Activated naive CD4-positive, alpha-beta T cell treated with anti-CD3 and anti-CD28 coated beads for 36 hours (primary cell): ENCODE measurements at regions of chr7 and their contacts with region 1.

Region 1: DNA sequence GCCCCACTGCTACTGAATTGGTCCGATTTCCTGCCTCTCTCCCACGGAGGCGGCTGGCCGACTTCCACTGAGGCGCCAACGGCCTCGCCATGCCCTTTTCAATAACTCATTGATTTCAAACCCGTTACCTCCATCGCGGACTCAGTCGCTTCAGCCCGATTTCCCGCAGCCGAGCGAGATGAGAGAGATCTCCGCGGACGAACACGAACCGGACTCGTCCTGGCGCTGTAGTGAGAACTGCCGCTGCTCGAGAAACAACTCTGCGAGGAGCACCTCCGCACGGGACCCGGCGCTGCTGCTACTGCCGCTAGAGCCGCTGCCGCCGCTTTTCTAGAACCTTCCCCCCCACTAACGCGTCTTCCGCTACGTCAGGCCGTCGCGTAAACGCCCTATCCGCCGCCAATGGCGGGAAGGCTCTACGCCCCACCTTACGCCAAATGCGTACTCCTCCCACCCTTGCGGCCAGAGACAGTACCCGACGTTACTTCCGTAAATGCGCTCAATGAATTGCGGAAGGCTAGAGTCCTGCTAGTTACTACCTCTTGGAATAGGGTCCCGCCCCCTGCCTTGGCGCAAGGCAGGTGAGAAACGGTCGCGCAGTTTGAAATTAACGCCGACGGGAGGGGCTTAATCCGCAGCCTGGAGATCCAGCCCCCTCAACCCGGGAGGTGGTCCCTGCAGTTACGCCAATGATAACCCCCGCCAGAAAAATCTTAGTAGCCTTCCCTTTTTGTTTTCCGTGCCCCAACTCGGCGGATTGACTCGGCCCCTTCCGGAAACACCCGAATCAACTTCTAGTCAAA is at the start of gene HNRNPA2B1:
- DNase-seq: peak; percentile 98
- H3K4me3 Mint-ChIP-seq: peak within 1 kb of the TSS; percentile 100
- H3K27ac Mint-ChIP-seq: peak within 1 kb of the TSS; percentile 100
- H3K4me1 Mint-ChIP-seq: peaks cover 38% of the 10 kb centered on the region
- H3K27me3 Mint-ChIP-seq: no peaks in the 10 kb centered on the region
- total RNA-seq, gene HNRNPA2B1: 925 to 950 TPM

Region 2: DNA sequence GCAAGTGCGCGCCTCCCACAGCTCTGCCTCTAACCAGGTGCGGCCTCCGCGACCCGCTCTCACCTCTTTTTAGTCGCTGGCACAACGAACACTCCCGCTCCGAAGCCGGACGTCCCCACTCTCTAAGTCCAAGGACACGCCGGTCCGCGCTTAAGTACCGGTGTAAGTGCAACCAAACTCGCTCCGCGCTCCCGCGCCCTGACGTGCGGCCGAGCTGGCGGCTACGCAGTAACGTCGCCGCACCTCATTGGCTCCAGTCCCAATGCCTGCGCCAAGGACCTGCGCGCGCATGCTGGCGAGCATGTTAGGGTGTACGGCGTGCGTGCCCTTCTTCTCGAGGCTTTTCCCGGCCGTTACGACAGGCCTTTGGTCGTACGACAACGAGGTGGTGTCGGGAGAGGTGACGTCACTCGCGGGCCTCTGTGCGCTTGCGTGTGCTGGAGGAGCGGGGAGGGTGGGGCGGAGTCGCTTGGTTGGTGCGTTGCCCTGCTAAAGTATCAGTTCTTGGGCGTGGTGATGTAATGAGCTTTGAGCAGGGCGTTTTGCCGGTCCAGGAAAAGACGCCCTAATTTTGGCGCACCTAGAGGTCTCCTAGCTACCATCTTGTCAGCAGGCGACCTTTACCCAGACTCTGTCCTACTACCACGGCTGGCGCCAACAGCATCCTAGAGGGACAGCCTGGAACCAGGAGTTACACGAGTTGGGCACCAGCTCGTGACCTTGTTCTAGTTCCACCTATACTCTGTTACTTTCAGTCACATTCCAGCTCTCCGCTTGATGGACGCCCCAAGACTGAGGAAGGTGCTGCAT is 1075.3 kb before region 1 on chr7 and contains the start of gene CYCS:
- CTCF ChIA-PET with region 1: no interaction called
- intact Hi-C with region 1: loop called (anchors 2 kb)
- DNase-seq: peak; percentile 100
- H3K4me3 Mint-ChIP-seq: peak within 1 kb of the TSS; percentile 93
- H3K27ac Mint-ChIP-seq: peak within 1 kb of the TSS; percentile 98
- H3K4me1 Mint-ChIP-seq: peaks cover 31% of the 10 kb centered on the region
- H3K27me3 Mint-ChIP-seq: no peaks in the 10 kb centered on the region
- total RNA-seq, gene CYCS: 213 to 224 TPM

Region 3: GRCh38 chr7:25862260-25863037 is 338.2 kb before region 1 on chr7:
- CTCF ChIA-PET with region 1: no interaction called
- intact Hi-C with region 1: loop called (anchors 1 kb)
- DNase-seq: peak; percentile 99
- H3K4me3 Mint-ChIP-seq: peak overlapping the region; percentile 58
- H3K27ac Mint-ChIP-seq: peak overlapping the region; percentile 38
- H3K4me1 Mint-ChIP-seq: peaks cover 22% of the 10 kb centered on the region
- H3K27me3 Mint-ChIP-seq: peaks cover 70% of the 10 kb centered on the region

Region 4: DNA sequence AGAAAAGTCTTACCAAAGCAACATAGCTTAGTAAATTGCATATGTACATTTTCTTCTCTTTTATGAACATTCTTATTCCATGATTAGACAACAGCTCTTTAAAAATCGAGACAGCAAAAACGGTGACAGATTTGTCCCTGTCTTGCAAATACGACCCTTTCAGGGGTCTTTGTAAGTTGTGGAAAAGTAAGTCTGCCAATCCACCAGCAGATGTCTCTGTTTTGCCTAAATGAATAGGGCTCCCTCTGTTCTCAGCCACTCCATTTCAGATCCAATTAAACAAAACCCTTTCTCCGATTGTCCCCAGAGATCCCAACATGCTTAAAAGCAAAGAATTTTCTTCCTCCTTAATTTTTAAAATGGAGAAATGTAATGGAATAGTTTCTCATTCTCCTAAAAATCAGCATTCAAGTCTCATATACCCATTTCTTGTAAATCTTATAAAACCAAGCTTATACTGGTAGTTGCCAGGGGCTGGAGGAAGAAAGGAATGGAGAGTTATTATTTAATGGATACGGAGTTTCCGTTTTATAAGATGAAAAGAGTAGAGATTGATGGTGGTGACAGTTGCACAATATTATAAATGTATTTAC is 109.6 kb before region 1 on chr7:
- CTCF ChIA-PET with region 1: interaction called, 27 read pairs
- intact Hi-C with region 1: loop called (anchors 1 kb)
- DNase-seq: peak; percentile 15
- H3K4me3 Mint-ChIP-seq: no peak overlapping the region
- H3K27ac Mint-ChIP-seq: no peak overlapping the region
- H3K4me1 Mint-ChIP-seq: peaks cover 19% of the 10 kb centered on the region
- H3K27me3 Mint-ChIP-seq: no peaks in the 10 kb centered on the region

Region 5: DNA sequence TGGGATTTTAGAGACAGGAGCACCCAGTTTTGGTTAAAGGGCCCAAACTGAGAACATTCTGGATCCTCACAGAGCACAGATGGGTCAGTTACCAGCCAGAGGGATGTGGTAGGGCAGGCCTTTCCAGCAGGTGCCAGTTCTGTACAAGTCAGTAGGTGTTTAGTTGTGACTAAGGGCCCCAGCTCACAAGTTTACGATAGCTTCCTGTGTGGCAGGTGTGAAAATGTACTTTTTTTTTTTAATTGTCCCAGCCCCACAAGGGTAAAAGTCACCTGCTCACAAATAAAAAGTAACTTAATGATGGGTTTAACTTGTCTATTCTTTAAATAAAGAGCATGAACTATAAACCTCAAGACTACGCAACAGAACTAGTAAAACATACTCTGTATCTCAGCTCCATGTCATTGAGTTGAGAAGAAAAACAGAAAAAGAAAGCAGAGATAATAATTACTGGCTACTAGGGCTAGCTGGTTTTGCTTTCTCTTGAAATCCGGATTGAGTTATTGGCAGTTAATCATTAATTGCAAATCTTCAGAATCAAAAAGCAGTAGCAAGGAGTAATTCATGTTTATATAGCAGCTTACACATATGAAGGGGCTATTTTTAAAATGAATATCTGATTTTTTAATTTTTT is 33.2 kb before region 1 on chr7:
- CTCF ChIA-PET with region 1: interaction called, 5 read pairs
- intact Hi-C with region 1: loop called (anchors 1 kb)
- DNase-seq: peak; percentile 79
- H3K4me3 Mint-ChIP-seq: peak overlapping the region; percentile 23
- H3K27ac Mint-ChIP-seq: peak overlapping the region; percentile 94
- H3K4me1 Mint-ChIP-seq: peaks cover 40% of the 10 kb centered on the region
- H3K27me3 Mint-ChIP-seq: no peaks in the 10 kb centered on the region

Region 6: GRCh38 chr7:26376175-26376917 is 175.7 kb after region 1 on chr7:
- CTCF ChIA-PET with region 1: no interaction called
- intact Hi-C with region 1: loop called (anchors 2 kb)
- DNase-seq: peak; percentile 60
- H3K4me3 Mint-ChIP-seq: peak overlapping the region; percentile 78
- H3K27ac Mint-ChIP-seq: no peak overlapping the region
- H3K4me1 Mint-ChIP-seq: no peaks in the 10 kb centered on the region
- H3K27me3 Mint-ChIP-seq: peaks cover 36% of the 10 kb centered on the region

Region 7: GRCh38 chr7:27739909-27740448 is 1539.3 kb after region 1 on chr7 and contains the start of gene TAX1BP1:
- CTCF ChIA-PET with region 1: no interaction called
- intact Hi-C with region 1: loop called (anchors 2 kb)
- DNase-seq: peak; percentile 96
- H3K4me3 Mint-ChIP-seq: peak within 1 kb of the TSS; percentile 96
- H3K27ac Mint-ChIP-seq: peak within 1 kb of the TSS; percentile 98
- H3K4me1 Mint-ChIP-seq: peaks cover 35% of the 10 kb centered on the region
- H3K27me3 Mint-ChIP-seq: no peaks in the 10 kb centered on the region
- total RNA-seq, gene TAX1BP1: 84.1 to 87.9 TPM